ENCODE measurements at regions of chr15 and their contacts with region 1.

Region 1: DNA sequence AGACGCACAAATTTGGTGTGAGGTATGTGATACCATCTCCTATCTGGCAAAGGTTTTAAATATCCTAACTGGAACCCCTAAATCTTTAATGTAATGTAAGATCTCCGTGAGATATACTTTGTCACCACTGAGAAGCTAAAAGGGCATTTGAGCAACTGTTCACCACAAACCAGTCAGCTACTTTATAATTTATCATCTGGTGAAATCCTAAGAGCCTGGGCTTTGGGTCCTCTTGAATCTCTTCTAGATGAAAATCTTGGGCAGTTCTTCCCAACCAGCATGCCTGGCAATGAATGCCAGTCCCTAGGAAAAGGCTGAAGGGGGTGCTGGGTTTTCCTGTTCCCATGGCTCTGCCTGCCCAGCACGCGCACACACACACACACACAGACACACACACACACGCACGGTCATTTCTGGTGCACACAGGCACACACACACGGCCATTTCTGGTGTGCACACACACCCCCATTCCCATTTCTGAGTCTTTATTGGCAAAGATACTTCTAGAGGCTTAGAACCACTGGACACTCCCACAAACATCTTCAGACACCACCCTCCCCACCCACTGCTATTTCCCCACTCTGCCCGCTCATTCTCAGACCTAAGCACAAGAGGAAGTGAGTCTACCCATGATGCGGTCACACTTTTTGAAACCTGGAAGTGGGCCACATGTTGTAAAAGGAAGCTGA is 72.6 kb downstream of the MYO1E start:
- DNase-seq: peak; percentile 82
- ATAC-seq: peak; percentile 86
- H3K4me3 Mint-ChIP-seq: peak overlapping the region; percentile 38
- H3K27ac Mint-ChIP-seq: peak overlapping the region; percentile 48
- H3K4me1 Mint-ChIP-seq: peaks cover 39% of the 10 kb centered on the region
- H3K27me3 Mint-ChIP-seq: no peaks in the 10 kb centered on the region

Region 2: GRCh38 chr15:58433597-58434333 is 866.3 kb before region 1 on chr15:
- CTCF ChIA-PET with region 1: no interaction called
- POLR2A ChIA-PET with region 1: no interaction called
- intact Hi-C with region 1: no loop called
- DNase-seq: no peak
- ATAC-seq: no peak
- H3K4me3 Mint-ChIP-seq: no peak overlapping the region
- H3K27ac Mint-ChIP-seq: no peak overlapping the region
- H3K4me1 Mint-ChIP-seq: no peaks in the 10 kb centered on the region
- H3K27me3 Mint-ChIP-seq: no peaks in the 10 kb centered on the region

Region 3: GRCh38 chr15:59255647-59256380 is 44.3 kb before region 1 on chr15:
- CTCF ChIA-PET with region 1: no interaction called
- POLR2A ChIA-PET with region 1: no interaction called
- intact Hi-C with region 1: loop called (anchors 1 to 5 kb)
- DNase-seq: peak; percentile 40
- ATAC-seq: peak; percentile 44
- H3K4me3 Mint-ChIP-seq: no peak overlapping the region
- H3K27ac Mint-ChIP-seq: no peak overlapping the region
- H3K4me1 Mint-ChIP-seq: peaks cover 18% of the 10 kb centered on the region
- H3K27me3 Mint-ChIP-seq: peaks cover 2% of the 10 kb centered on the region

Region 4: DNA sequence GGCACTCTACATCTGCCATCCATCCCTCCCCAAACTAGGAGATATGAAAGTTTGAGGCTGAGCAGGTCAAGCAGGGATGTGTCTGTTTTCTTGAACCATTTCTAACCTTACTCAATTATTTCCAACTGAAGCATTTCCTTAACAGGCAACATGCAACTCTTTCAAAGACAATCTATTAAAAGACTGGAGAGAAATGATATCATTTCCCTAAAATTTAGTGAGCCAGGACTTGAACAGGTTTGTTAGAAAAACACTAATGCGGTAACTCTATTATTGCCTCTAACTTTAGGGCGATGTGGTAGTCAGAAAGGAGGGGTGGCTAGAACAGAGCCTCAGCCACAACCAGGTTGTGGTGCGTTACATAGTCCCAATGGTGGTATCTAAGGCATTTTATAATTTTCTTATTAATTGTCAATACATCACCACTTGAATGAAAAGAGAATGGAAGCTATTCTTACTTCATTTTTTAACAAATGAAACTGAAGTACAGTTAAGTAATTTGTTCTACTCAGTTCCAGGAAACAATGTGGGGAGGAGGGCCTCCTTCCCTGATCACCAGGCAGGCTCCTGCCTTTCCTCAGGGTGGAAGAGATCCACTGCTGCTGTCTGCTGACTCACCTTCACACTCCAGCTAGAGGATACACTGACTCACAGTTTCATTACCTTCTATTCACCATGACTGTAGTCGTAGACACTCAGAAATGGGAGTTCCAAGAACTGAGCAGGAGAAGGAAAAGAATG is 49.8 kb after region 1 on chr15:
- CTCF ChIA-PET with region 1: no interaction called
- POLR2A ChIA-PET with region 1: no interaction called
- intact Hi-C with region 1: loop called in 1 of 2 experiments (anchors 1 kb)
- DNase-seq: peak; percentile 51
- ATAC-seq: peak; percentile 100
- H3K4me3 Mint-ChIP-seq: no peak overlapping the region
- H3K27ac Mint-ChIP-seq: peak overlapping the region; percentile 2
- H3K4me1 Mint-ChIP-seq: peaks cover 18% of the 10 kb centered on the region
- H3K27me3 Mint-ChIP-seq: peaks cover 5% of the 10 kb centered on the region

Region 5: DNA sequence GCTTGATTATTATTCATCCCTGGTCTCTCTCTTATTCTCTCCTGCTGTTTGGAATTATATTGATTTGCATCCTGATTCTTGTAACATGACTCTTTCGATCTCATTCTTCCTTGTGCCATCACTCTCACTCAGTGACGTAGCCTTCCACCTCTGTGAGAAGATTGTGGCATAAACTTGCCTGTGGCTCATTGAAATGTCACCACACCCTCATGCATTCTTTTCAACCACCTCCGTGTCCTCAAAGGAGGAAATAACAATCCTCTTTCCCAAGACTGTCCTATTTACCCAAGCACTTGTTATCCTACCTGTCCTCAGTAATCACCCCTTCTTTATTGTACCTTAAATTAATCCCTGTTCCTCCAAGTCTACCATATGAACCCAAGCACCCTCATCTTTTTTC is 270.3 kb after region 1 on chr15:
- CTCF ChIA-PET with region 1: no interaction called
- POLR2A ChIA-PET with region 1: no interaction called
- intact Hi-C with region 1: no loop called
- DNase-seq: no peak
- ATAC-seq: no peak
- H3K4me3 Mint-ChIP-seq: no peak overlapping the region
- H3K27ac Mint-ChIP-seq: no peak overlapping the region
- H3K4me1 Mint-ChIP-seq: no peaks in the 10 kb centered on the region
- H3K27me3 Mint-ChIP-seq: peaks cover 6% of the 10 kb centered on the region

Measured in activated CD4-positive, alpha-beta T cell treated with anti-CD3 and anti-CD28 coated beads for 36 hours (primary cell).